AG04449 (cell line): ENCODE measurements at regions of chr2 and their contacts with region 1.

Region 1: DNA sequence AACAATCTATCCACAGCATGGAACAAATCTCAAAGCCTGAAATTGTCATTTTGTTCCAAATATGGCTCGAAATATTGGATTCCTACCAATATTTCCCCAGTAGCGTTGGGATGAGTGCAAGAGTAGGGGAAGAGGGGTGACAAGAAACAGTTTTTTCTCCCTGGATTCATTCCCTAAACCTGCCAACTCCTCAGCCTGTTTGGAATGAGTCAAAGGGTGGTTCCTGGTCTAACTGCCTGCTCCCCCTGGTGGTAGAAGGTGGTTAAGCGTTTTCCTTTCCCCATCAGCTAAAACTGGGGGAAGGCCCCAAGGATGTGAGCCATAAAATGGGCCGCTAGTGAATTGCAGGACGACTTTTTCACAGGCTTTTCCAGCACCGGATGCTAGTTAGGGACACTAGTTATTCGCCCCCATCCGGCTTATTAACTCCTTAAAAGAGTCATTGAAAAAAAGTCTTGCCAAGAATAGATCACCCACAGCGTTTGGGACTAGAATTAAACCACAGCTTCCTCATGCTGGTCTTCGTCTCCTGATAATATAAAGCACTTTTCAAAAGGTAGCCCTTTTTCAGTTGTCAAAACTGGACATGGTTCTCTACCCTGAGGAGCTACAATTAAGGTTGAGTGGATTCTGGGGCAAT is 72.5 kb downstream of the DHRS9 start:
- DNase-seq: no peak
- H3K4me3 ChIP-seq: no peak overlapping the region
- CTCF ChIP-seq: peak; percentile 88

Region 2: GRCh38 chr2:168961450-168962229 is 180.2 kb before region 1 on chr2:
- CTCF ChIA-PET with region 1: interaction called, 15 read pairs
- POLR2A ChIA-PET with region 1: no interaction called
- DNase-seq: peak; percentile 33
- H3K4me3 ChIP-seq: no peak overlapping the region
- CTCF ChIP-seq: peak; percentile 80

Region 3: DNA sequence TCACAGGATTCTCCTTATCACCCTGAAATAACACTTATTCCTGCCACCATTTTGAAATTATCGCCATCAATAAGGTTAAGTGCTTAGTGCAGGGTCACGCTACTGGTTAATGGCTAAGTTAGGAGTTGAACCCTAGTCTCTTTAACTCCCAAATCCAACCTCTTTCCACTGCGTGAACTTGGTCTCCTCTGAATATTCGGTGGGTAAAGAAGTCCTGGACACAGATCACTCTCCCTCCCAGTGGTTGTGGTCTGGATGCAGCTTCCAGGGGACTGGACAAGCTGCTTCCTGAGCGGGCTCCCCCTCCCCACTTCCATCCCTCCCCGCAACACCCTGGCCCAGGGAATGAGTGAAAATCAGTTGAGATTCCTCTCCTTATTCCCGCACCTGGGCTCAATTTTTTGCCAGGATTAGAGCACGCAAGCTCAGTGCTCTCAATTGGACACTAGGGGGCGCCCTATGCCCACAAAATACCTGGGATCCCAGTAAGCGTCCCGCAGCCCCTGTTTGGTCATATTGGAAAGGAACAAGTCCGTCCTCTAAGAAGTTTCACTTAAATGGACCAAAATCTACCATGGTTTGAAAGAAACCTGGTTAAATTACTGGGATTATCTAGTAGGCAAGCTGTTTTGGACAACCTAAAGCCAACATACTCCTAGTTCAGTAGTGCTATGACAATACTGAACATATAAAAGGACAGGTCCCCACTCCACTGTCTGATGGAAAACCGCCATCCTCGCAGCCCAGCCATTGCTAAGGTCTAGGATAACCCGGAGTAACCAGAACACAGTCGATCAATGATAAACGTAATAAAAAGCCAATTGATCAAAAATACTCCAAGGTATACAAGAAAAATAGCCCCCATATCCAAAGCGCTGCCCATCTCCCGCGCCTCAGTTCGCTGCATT is 32.1 kb before region 1 on chr2:
- CTCF ChIA-PET with region 1: interaction called, 48 read pairs
- POLR2A ChIA-PET with region 1: no interaction called
- DNase-seq: peak; percentile 21
- H3K4me3 ChIP-seq: no peak overlapping the region
- CTCF ChIP-seq: peak; percentile 77

Region 4: GRCh38 chr2:169159686-169160085 is 17.9 kb after region 1 on chr2:
- CTCF ChIA-PET with region 1: interaction called, 12 read pairs
- POLR2A ChIA-PET with region 1: no interaction called
- DNase-seq: no peak
- H3K4me3 ChIP-seq: no peak overlapping the region
- CTCF ChIP-seq: no peak

Region 5: DNA sequence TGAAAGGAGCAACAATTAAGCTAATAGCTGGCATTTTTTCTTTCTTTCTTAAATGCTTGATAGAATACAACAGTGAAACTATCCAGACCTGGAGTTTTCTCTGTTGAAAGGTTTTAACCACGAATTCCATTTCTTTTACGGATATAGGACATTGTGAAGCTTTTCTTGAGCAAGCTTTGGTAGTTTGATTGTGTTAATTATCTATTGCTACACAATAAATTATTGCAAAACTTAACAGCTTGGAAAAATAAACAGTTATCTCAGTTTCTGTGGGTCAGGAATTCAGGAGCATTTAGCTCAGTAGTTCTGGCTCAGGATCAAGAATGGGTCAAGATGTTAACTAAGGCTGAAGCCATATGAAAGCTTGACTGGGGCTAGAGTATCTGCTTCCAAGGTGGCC is 564.1 kb after region 1 on chr2:
- CTCF ChIA-PET with region 1: no interaction called
- POLR2A ChIA-PET with region 1: no interaction called
- DNase-seq: peak; percentile 65
- H3K4me3 ChIP-seq: no peak overlapping the region
- CTCF ChIP-seq: no peak